PC-9 (cell line): ENCODE measurements at regions of chr7 and their contacts with region 1.

Region 1: DNA sequence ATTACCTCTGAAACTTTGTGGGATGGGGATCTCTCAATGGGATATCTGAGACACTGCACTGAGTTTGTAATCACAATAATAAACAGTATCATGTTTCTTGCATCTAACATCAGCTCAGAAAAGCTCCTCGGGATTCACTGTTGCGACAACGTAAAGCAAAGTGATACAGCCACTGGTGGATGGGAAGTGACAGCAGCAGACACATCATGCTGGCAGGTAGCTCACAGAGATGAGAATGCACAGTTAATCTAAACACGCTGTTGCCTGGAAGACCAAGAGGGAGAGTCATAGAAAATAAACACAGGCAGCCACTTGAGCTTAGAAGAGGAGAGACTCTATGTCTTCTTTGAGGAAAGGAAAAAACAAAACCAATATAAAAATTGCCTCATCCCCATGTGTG is 513.8 kb downstream of the MAGI2 start:
- DNase-seq: no peak
- H3K4me3 ChIP-seq: no peak overlapping the region
- H3K27ac ChIP-seq: no peak overlapping the region
- H3K4me1 ChIP-seq: no peaks in the 10 kb centered on the region
- H3K27me3 ChIP-seq: no peaks in the 10 kb centered on the region
- CTCF ChIP-seq: no peak

Region 2: GRCh38 chr7:78510580-78511188 is 429.0 kb before region 1 on chr7:
- CTCF ChIA-PET with region 1: no interaction called
- POLR2A ChIA-PET with region 1: no interaction called
- intact Hi-C with region 1: loop called (anchors 5 kb)
- DNase-seq: peak in 1 of 2 experiments; percentile 40
- H3K4me3 ChIP-seq: no peak overlapping the region
- H3K27ac ChIP-seq: no peak overlapping the region
- H3K4me1 ChIP-seq: no peaks in the 10 kb centered on the region
- H3K27me3 ChIP-seq: no peaks in the 10 kb centered on the region
- CTCF ChIP-seq: peak; percentile 66